Right ventricle myocardium inferior (tissue), 1 donor: ENCODE measurements at regions of chr6 and their contacts with region 1.

Region 1: GRCh38 chr6:7107578-7108195 is at the start of gene RREB1:
- DNase-seq: peak; percentile 81
- ATAC-seq: peak; percentile 77
- total RNA-seq, gene RREB1: 34.2 TPM

Region 2: GRCh38 chr6:6686748-6687601 is 420.7 kb before region 1 on chr6:
- intact Hi-C with region 1: loop called (anchors 5 kb)
- DNase-seq: peak; percentile 97
- ATAC-seq: peak; percentile 88

Region 3: DNA sequence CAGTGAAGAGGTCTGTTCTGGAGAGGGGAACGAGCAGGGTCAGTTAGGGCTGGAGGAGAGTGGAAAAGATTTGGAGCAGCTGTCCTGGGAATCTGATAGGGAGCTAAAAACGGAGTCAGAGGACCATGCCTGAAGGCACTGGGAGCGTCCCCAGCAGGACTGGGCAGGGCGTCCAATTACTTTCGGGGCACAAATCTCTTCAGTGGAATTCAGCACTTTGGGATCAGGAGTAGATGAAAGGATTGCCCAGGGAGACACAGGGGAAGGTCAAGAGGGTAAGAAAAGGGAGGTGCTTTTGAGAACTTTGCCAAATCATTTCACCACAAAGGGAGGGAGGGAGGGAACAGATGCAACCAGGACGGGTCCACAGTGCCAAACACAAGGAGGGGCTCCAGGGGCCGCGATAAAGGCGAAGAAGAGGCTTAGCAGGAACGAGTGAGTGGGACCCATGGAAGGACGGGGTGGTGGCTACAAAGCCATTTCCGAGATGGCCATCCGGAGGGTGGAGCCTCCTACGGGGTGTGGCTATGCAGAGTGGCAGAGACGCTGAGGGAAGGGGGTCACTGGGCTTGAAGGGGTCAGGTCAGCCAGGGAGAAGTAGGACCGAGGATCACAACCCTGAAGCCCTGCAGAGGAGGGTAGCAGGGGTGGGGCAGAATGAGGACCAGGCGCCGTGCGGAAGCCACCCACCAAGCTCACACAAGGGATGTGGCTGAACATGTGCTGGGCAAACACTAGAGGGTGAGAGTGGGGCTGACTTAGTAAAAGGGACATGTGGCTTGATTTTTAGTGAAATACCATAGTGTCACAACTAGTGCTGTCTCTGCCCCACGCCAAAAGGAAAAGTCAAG is 179.9 kb before region 1 on chr6:
- intact Hi-C with region 1: loop called (anchors 10 kb)
- DNase-seq: peak; percentile 76
- ATAC-seq: peak; percentile 88

Region 4: DNA sequence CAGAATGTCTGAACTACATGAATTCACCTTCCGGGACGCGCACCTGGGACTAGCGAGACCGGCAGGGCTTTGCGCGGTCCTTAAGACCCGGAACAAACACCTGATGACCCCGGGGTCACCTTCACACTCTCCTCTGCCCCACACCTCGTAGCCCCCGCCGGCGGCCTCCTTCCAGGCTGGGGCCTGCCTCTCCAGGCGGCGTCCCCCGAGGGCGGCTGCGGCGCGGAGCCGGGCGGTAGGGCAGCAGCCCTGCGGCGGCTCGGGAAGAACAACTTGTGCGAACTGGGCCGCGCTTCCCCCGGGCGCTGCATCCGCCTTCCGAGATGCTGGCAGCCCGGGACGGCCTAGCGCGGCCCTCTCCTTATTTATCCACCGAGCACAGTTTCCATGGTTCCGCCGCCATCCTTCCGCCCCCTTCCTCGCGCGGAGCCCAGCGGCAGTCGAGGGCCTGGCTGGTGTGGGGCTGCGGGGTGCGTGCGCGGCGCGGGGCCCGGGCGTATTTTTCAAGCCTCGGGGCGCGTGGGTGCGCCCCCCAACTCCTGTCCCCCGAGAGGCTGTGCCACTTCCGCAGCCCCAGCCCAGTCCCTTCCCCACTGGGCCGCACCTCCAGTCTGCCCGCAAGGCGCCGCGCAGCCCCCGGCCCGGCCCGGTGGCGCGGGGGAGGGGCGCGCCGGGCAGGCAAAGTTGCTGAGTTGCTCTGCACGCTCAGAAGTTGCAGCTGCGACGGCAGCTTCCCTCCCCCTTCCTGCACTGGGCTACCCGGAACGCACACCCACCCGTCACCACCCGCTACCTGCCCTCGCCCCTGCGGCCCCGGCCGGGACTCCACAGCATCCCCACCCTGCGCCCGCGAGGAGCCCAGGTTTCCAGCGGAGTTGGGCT is 56.2 kb before region 1 on chr6:
- intact Hi-C with region 1: loop called (anchors 5 kb)
- DNase-seq: peak; percentile 84
- ATAC-seq: peak; percentile 71

Region 5: DNA sequence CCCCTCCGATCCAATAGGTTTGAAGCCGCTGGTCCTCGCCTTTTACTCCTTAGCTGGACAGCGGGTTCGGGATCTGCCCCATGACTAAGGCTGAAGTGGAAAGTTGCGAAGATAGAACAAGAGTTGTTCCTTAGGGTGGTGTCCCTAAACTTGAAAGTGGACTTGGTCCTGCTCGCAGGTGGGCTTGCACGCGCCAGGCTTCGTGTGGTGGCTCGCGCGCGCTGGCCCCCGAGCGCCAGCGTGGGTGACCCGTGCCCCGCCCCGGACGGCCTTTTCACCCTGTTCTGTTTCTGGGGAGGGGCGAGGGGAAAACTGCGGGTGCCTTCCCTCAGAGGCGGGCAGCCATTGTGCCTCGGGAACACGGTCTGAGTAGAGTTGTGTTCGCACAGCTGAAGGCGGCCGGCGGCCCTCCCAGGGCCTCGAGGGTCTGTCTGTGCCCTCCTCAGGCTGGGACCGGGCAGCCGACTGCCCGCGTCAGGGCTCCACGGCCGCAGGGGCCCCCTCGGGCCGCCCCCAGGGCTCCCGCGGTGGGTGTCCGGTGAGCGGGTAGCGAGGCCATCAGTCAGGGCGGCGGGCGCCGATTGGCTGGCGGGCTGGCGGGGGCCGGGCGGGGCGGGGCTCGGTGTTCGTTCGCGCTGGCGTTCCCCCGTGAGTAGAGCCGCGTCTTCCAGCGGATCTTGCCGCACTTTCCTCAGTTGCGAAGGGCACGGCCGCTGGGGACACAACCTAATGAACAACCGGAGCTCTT is 33.1 kb after region 1 on chr6:
- intact Hi-C with region 1: loop called (anchors 2 kb)
- DNase-seq: peak; percentile 95
- ATAC-seq: peak; percentile 95

Region 6: GRCh38 chr6:7219310-7219709 is 111.6 kb after region 1 on chr6:
- intact Hi-C with region 1: loop called (anchors 2 kb)
- DNase-seq: no peak
- ATAC-seq: peak; percentile 30

Region 7: GRCh38 chr6:7243179-7243981 is 135.7 kb after region 1 on chr6:
- intact Hi-C with region 1: loop called (anchors 5 kb)
- DNase-seq: no peak
- ATAC-seq: peak; percentile 51